Body of pancreas (tissue), 4 donors: ENCODE measurements at regions of chr20 and their contacts with region 1.

Region 1: DNA sequence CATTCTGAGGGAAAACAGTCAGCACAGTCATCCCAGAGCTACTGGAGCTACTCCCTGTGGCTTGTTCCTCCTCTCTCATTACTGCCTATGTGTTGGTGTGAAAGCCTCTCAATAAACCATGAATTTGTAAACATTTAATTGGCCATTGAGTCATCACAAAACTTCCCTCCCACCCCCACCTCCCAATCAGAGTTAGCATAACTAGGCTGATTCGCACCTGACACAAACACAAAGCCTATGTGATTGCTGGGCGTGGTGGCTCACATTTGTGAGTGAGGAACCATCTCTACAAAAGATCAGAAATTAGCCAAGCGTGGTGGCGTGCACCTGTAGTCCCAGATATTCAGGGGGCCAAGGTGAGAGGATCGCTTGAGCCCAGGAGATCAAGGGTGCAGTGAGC is 17.1 kb upstream of the SNTA1 start:
- DNase-seq: no peak
- ATAC-seq: no peak
- H3K4me3 ChIP-seq: no peak overlapping the region
- H3K27ac ChIP-seq: no peak overlapping the region
- H3K4me1 ChIP-seq: no peaks in the 10 kb centered on the region
- H3K27me3 ChIP-seq: no peaks in the 10 kb centered on the region
- CTCF ChIP-seq: no peak
- POLR2A ChIP-seq: no peak

Region 2: DNA sequence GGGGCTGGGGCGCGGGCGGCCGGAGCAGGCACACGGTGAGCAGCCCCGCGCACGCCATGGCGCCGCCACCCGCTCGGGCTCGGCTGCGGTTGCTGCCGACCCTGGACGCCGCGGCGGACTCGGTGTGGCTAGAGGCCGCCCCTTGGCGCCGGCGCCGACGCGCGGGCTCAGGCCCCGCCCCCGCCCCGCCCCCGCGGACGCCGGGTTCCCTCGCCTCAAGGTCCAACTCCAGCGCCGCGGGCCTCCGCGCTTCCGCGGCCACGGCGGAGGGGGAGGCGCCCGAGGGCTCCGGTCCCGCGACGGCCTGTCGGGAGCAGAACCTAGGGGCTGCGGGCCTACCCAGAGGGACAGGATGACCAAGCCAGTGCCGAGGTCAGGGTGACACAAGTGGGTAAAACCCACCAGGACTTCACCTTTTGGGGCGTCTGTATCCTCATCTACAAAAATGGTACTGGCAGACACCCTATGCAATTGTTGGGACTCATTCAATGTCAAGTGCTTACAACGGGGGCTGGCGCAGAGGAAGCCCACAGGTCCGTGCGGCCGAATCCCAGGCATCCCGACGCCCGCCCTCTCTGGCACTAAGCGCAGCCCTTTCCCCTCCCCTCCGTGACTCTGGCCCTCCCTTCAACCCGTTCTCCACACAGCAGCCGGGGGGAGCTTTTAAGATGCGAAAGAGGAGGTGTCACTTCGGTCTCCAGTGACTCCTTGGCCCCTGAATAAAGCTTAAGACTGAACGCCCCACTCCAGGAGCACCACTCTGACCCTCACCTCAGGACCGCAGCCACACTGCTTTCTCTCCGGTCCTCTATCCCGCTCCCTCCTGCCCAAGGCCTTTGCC is 213.8 kb after region 1 on chr20 and contains the start of gene NECAB3:
- intact Hi-C with region 1: loop called (anchors 5 kb)
- DNase-seq: peak; percentile 86 to 92 (median 87)
- ATAC-seq: peak; percentile 94
- H3K4me3 ChIP-seq: peak within 1 kb of the TSS; percentile 34 to 35
- H3K27ac ChIP-seq: peak within 1 kb of the TSS; percentile 21 to 75 (median 66)
- H3K4me1 ChIP-seq: peaks cover 30% of the 10 kb centered on the region
- H3K27me3 ChIP-seq: no peaks in the 10 kb centered on the region
- CTCF ChIP-seq: no peak
- POLR2A ChIP-seq: peak; percentile 44 to 49 (median 48)
- total RNA-seq, gene NECAB3: 41.8 to 92.3 TPM